ENCODE measurements at regions of chr2 and their contacts with region 1.

Region 1: GRCh38 chr2:68594674-68595492 is 48.5 kb upstream of the PROKR1 start:
- DNase-seq: peak in 32 of 35 experiments; percentile 9 to 75 (median 42)
- ATAC-seq: peak in 2 of 4 experiments; percentile 32 to 45
- H3K4me3 ChIP-seq: no peak overlapping the region
- H3K4me3 Mint-ChIP-seq: no peak overlapping the region
- H3K27ac ChIP-seq: no peak overlapping the region
- H3K27ac Mint-ChIP-seq: no peak overlapping the region
- H3K4me1 ChIP-seq: no peaks in the 10 kb centered on the region
- H3K4me1 Mint-ChIP-seq: peaks cover 7 to 11% (median 8%) of the 10 kb centered on the region in 3 donors
- H3K27me3 ChIP-seq: no peaks in the 10 kb centered on the region
- H3K27me3 Mint-ChIP-seq: peaks cover 2 to 18% of the 10 kb centered on the region in 2 donors

Region 2: DNA sequence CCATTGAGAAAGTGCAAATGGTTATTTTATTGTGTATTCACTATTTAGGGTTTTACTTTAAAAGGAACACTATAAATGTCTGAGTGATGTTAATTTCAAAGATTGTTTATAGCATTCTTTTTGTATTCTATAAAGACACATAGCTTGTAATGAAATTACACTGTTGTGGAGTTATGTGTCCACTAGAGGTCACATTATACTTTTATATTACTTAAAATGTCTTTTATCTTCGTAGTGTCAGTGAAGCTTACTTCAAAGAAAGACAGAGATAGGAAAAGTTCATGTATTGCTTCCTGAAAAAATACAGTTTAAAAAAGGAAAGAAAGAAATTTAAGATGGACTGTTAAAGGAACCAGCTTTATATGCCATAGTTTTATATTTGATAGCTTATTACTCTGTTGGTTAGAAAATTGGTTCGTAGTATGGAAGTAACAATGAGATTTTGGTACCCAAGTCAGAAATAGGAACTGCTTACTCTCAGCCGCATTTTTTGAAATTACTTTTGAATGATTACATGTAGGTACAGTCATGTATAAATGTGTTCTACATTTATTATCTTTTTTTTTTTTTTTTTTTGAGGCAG is 107.0 kb before region 1 on chr2:
- CTCF ChIA-PET with region 1: interaction called in 1 of 2 experiments, 24 read pairs
- POLR2A ChIA-PET with region 1: no interaction called
- DNase-seq: peak in 1 of 35 experiments; percentile 52
- ATAC-seq: peak in 1 of 4 experiments; percentile 54
- H3K4me3 ChIP-seq: no peak overlapping the region
- H3K4me3 Mint-ChIP-seq: no peak overlapping the region
- H3K27ac ChIP-seq: no peak overlapping the region
- H3K27ac Mint-ChIP-seq: peak overlapping the region in 1 of 2 donors; percentile 46
- H3K4me1 ChIP-seq: no peaks in the 10 kb centered on the region
- H3K4me1 Mint-ChIP-seq: peaks cover 4 to 6% (median 5%) of the 10 kb centered on the region in 3 donors
- H3K27me3 ChIP-seq: no peaks in the 10 kb centered on the region
- H3K27me3 Mint-ChIP-seq: no peaks in the 10 kb centered on the region

Region 3: DNA sequence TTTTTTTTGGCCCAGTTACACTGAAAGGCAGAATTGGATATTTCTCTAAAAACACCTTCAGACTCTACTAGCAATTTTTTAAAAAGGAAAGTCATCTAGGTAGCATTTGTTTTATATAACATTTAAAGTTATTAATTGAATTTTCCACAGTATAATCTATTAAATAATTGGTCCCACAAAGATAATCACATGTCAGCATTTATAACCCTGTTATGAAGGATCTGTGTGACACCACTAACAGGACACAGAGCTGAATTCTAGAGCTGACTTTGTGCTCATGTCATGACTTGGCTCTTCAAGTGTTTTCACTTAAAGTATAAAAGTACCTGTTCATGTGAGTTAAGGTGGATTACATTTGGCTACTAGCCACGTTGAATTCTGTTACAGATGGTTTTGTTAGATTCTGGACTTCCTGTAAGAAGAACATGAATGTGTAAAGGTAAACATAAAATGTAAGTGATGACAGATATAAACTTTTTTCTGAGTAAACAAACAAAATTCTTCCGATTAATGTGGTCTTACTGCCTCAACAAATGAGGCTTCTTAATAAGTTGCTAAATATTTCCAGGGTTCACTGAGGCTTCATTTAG is 20.6 kb before region 1 on chr2:
- CTCF ChIA-PET with region 1: interaction called in 1 of 2 experiments, 3 read pairs
- POLR2A ChIA-PET with region 1: interaction called in 1 of 2 experiments, 12 read pairs
- DNase-seq: no peak
- ATAC-seq: no peak
- H3K4me3 ChIP-seq: no peak overlapping the region
- H3K4me3 Mint-ChIP-seq: no peak overlapping the region
- H3K27ac ChIP-seq: no peak overlapping the region
- H3K27ac Mint-ChIP-seq: no peak overlapping the region
- H3K4me1 ChIP-seq: no peaks in the 10 kb centered on the region
- H3K4me1 Mint-ChIP-seq: no peaks in the 10 kb centered on the region
- H3K27me3 ChIP-seq: no peaks in the 10 kb centered on the region
- H3K27me3 Mint-ChIP-seq: no peaks in the 10 kb centered on the region

Region 4: GRCh38 chr2:68605939-68606338 is 11.1 kb after region 1 on chr2:
- CTCF ChIA-PET with region 1: interaction called, 3 to 13 read pairs
- POLR2A ChIA-PET with region 1: no interaction called
- DNase-seq: no peak
- ATAC-seq: no peak
- H3K4me3 ChIP-seq: no peak overlapping the region
- H3K4me3 Mint-ChIP-seq: no peak overlapping the region
- H3K27ac ChIP-seq: no peak overlapping the region
- H3K27ac Mint-ChIP-seq: no peak overlapping the region
- H3K4me1 ChIP-seq: peaks cover 0 to 2% of the 10 kb centered on the region in 2 experiments
- H3K4me1 Mint-ChIP-seq: peaks cover 0 to 5% (median 0%) of the 10 kb centered on the region in 3 donors
- H3K27me3 ChIP-seq: no peaks in the 10 kb centered on the region
- H3K27me3 Mint-ChIP-seq: no peaks in the 10 kb centered on the region

Measured in T-cell (primary cell).